H1 (cell line): ENCODE measurements at regions of chr5 and their contacts with region 1.

Region 1: GRCh38 chr5:16690243-16690852 is 73.6 kb upstream of the RETREG1 start:
- DNase-seq: peak in 1 of 2 experiments; percentile 66
- H3K4me3 ChIP-seq: no peak overlapping the region
- H3K27ac ChIP-seq: no peak overlapping the region
- H3K4me1 ChIP-seq: 0 out of 7 replicates have a peak, but pooled peaks cover 0 to 2% (median 0%) of the 10 kb centered on the region in 4 experiments
- H3K27me3 ChIP-seq: no peaks in the 10 kb centered on the region
- CTCF ChIP-seq: peak; percentile 71 to 88 (median 81)
- EP300 ChIP-seq: no peak
- POLR2A ChIP-seq: no peak
- RAD21 ChIP-seq: peak; percentile 73 to 81

Region 2: GRCh38 chr5:16378762-16379161 is 311.6 kb before region 1 on chr5:
- CTCF ChIA-PET with region 1: no interaction called
- POLR2A ChIA-PET with region 1: no interaction called
- DNase-seq: no peak
- H3K4me3 ChIP-seq: no peak overlapping the region
- H3K27ac ChIP-seq: no peak overlapping the region
- H3K4me1 ChIP-seq: no peaks in the 10 kb centered on the region
- H3K27me3 ChIP-seq: no peaks in the 10 kb centered on the region
- CTCF ChIP-seq: no peak
- EP300 ChIP-seq: no peak
- POLR2A ChIP-seq: no peak
- RAD21 ChIP-seq: no peak

Region 3: GRCh38 chr5:16612007-16612406 is 78.3 kb before region 1 on chr5:
- CTCF ChIA-PET with region 1: no interaction called
- POLR2A ChIA-PET with region 1: no interaction called
- DNase-seq: no peak
- H3K4me3 ChIP-seq: no peak overlapping the region
- H3K27ac ChIP-seq: no peak overlapping the region
- H3K4me1 ChIP-seq: peaks cover 0 to 9% (median 4%) of the 10 kb centered on the region in 4 experiments; a peak in 5 of 7 replicates
- H3K27me3 ChIP-seq: peaks cover 5 to 16% (median 12%) of the 10 kb centered on the region in 4 experiments; a peak in 6 of 7 replicates
- CTCF ChIP-seq: no peak
- EP300 ChIP-seq: no peak
- POLR2A ChIP-seq: no peak
- RAD21 ChIP-seq: no peak

Region 4: DNA sequence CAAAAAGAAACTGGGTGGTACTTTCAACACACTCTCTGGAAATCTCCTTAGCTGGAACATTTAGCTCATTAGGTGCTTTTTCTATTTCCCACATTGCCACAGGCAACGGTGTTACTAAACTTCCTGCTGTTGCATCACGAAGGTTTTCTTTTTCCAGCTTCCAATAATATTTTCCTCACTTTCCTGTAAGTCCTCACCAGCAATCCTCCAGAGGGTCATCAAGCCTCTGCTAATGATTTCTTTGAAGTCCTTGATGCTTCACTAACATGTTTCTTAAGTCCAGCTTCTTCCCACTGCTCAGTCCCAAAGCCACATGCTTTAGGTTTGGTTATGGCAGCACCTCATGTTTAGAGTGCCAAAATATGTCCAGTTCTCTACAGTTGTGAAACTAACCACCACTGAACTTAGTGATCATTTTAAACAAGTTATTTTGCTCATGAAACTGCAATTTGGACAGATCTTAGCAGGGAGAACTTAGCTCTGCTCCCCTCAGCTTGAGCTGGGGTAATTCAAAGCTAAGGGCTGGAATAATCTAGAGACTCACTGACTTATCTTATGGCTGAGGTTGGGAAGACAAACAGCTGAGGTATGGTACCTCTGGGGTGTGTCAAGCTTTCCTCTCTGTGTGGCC is 33.7 kb before region 1 on chr5:
- CTCF ChIA-PET with region 1: interaction called, 11 read pairs
- POLR2A ChIA-PET with region 1: no interaction called
- DNase-seq: no peak
- H3K4me3 ChIP-seq: no peak overlapping the region
- H3K27ac ChIP-seq: no peak overlapping the region
- H3K4me1 ChIP-seq: no peaks in the 10 kb centered on the region
- H3K27me3 ChIP-seq: no peaks in the 10 kb centered on the region
- CTCF ChIP-seq: no peak
- EP300 ChIP-seq: no peak
- POLR2A ChIP-seq: no peak
- RAD21 ChIP-seq: no peak

Region 5: GRCh38 chr5:16673241-16674201 is 16.8 kb before region 1 on chr5:
- CTCF ChIA-PET with region 1: interaction called, 51 read pairs
- POLR2A ChIA-PET with region 1: interaction called, 4 read pairs
- DNase-seq: no peak
- H3K4me3 ChIP-seq: no peak overlapping the region
- H3K27ac ChIP-seq: no peak overlapping the region
- H3K4me1 ChIP-seq: no peaks in the 10 kb centered on the region
- H3K27me3 ChIP-seq: no peaks in the 10 kb centered on the region
- CTCF ChIP-seq: no peak
- EP300 ChIP-seq: no peak
- POLR2A ChIP-seq: no peak
- RAD21 ChIP-seq: no peak

Region 6: GRCh38 chr5:16701134-16702099 is 11.1 kb after region 1 on chr5:
- CTCF ChIA-PET with region 1: interaction called, 17 read pairs
- POLR2A ChIA-PET with region 1: interaction called, 7 read pairs
- DNase-seq: no peak
- H3K4me3 ChIP-seq: no peak overlapping the region
- H3K27ac ChIP-seq: peak overlapping the region; percentile 23; the same call in 1 of the 2 replicates
- H3K4me1 ChIP-seq: peaks cover 4 to 19% (median 14%) of the 10 kb centered on the region in 4 experiments; a peak in 4 of 7 replicates
- H3K27me3 ChIP-seq: no peaks in the 10 kb centered on the region
- CTCF ChIP-seq: no peak
- EP300 ChIP-seq: no peak
- POLR2A ChIP-seq: no peak
- RAD21 ChIP-seq: no peak

Region 7: GRCh38 chr5:16736158-16736995 is 46.0 kb after region 1 on chr5:
- CTCF ChIA-PET with region 1: interaction called, 14 read pairs
- POLR2A ChIA-PET with region 1: no interaction called
- DNase-seq: no peak
- H3K4me3 ChIP-seq: peak overlapping the region; percentile 27 to 89 (median 66)
- H3K27ac ChIP-seq: peak overlapping the region; percentile 90
- H3K4me1 ChIP-seq: peaks cover 12 to 35% (median 21%) of the 10 kb centered on the region in 4 experiments; a peak in 6 of 7 replicates
- H3K27me3 ChIP-seq: no peaks in the 10 kb centered on the region
- CTCF ChIP-seq: no peak
- EP300 ChIP-seq: no peak
- POLR2A ChIP-seq: peak; percentile 72 to 88
- RAD21 ChIP-seq: no peak

Region 8: GRCh38 chr5:17012302-17012701 is 322.0 kb after region 1 on chr5:
- CTCF ChIA-PET with region 1: no interaction called
- POLR2A ChIA-PET with region 1: no interaction called
- DNase-seq: no peak
- H3K4me3 ChIP-seq: no peak overlapping the region
- H3K27ac ChIP-seq: no peak overlapping the region
- H3K4me1 ChIP-seq: no peaks in the 10 kb centered on the region
- H3K27me3 ChIP-seq: no peaks in the 10 kb centered on the region
- CTCF ChIP-seq: no peak
- EP300 ChIP-seq: no peak
- POLR2A ChIP-seq: no peak
- RAD21 ChIP-seq: no peak